ENCODE measurements at regions of chr11 and their contacts with region 1.

Region 1: GRCh38 chr11:7513234-7514098 is at the start of gene PPFIBP2:
- DNase-seq: peak; percentile 94
- H3K4me3 ChIP-seq: peak within 1 kb of the TSS; percentile 65 to 82
- H3K27ac ChIP-seq: peak within 1 kb of the TSS; percentile 86 to 91
- H3K4me1 ChIP-seq: peaks cover 17% of the 10 kb centered on the region
- H3K27me3 ChIP-seq: no peaks in the 10 kb centered on the region
- CTCF ChIP-seq: peak; percentile 17 to 82 (median 69)
- POLR2A ChIP-seq: peak; percentile 85
- total RNA-seq, gene PPFIBP2: 76.3 to 88.3 TPM

Region 2: GRCh38 chr11:7665473-7666291 is 152.2 kb after region 1 on chr11:
- intact Hi-C with region 1: loop called (anchors 5 kb)
- DNase-seq: peak; percentile 77
- H3K4me3 ChIP-seq: no peak overlapping the region
- H3K27ac ChIP-seq: no peak overlapping the region
- H3K4me1 ChIP-seq: no peaks in the 10 kb centered on the region
- H3K27me3 ChIP-seq: no peaks in the 10 kb centered on the region
- CTCF ChIP-seq: peak; percentile 61 to 92 (median 87)
- POLR2A ChIP-seq: no peak